ENCODE measurements at regions of chr7 and their contacts with region 1.

Region 1: GRCh38 chr7:123871998-123872867 is 27.3 kb downstream of the HYAL4 start:
- DNase-seq: peak; percentile 21 to 58
- H3K4me3 ChIP-seq: no peak overlapping the region
- H3K27ac ChIP-seq: no peak overlapping the region
- H3K4me1 ChIP-seq: no peaks in the 10 kb centered on the region
- H3K27me3 ChIP-seq: no peaks in the 10 kb centered on the region
- CTCF ChIP-seq: peak; percentile 54 to 80 (median 66)
- EP300 ChIP-seq: no peak
- POLR2A ChIP-seq: no peak
- RAD21 ChIP-seq: peak; percentile 94 to 95

Region 2: GRCh38 chr7:123425246-123425645 is 447.0 kb before region 1 on chr7:
- CTCF ChIA-PET with region 1: no interaction called
- POLR2A ChIA-PET with region 1: no interaction called
- DNase-seq: no peak
- H3K4me3 ChIP-seq: no peak overlapping the region
- H3K27ac ChIP-seq: no peak overlapping the region
- H3K4me1 ChIP-seq: no peaks in the 10 kb centered on the region
- H3K27me3 ChIP-seq: no peaks in the 10 kb centered on the region
- CTCF ChIP-seq: no peak
- EP300 ChIP-seq: no peak
- POLR2A ChIP-seq: no peak
- RAD21 ChIP-seq: no peak

Region 3: DNA sequence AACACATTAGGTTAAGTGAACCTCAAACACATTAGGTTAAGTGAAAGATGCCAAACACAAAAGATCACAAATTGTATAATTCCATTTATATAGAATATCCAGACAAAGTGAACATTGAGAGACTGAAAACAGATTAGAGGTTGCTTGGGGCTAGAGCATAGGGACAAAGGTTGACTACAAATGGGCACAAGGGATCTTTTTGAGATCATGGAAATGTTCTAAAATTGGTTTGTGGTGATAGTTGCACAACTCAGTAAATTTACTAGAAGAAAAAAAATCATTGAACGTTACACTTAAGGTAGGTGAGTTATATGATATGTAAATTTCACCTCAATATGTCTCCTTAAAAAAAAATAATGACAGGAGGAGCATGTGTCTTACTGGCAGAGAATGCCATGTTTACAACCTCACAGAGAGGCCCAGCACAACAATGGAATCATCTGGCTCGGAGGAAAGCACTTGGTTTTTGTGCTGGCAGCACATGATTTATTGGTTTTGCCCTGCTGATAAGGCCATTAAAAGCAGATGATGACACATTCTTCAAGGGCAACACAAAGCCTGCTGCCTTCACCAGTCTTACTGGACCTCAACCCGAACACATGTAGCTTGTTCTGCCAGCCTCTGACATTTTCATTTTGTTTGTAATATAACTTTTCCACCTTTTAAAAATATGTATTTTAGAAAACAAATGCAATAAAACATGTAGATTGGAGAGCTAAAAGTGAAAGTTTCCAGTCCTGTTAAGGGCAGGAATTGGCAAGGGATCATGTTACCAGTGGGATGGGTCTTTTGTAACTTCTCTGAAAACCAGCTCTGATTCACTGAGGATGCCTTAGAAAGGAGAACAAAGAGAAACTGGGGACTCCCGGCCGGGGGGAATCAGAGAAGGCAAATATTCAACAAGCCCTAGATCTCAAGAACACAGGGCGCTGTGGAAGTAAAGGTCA is 228.5 kb before region 1 on chr7:
- CTCF ChIA-PET with region 1: interaction called, 10 read pairs
- POLR2A ChIA-PET with region 1: no interaction called
- DNase-seq: peak; percentile 33 to 57
- H3K4me3 ChIP-seq: peak overlapping the region in 3 of 4 experiments; percentile 6 to 31 (median 12); a peak in 4 of 8 replicates
- H3K27ac ChIP-seq: peak overlapping the region; percentile 60; the same call in 1 of the 2 replicates
- H3K4me1 ChIP-seq: peaks cover 3 to 13% (median 9%) of the 10 kb centered on the region in 4 experiments; a peak in 6 of 7 replicates
- H3K27me3 ChIP-seq: no peaks in the 10 kb centered on the region
- CTCF ChIP-seq: no peak
- EP300 ChIP-seq: no peak
- POLR2A ChIP-seq: peak in 1 of 2 experiments; percentile 55; a peak in 1 of 3 replicates
- RAD21 ChIP-seq: no peak

Region 4: DNA sequence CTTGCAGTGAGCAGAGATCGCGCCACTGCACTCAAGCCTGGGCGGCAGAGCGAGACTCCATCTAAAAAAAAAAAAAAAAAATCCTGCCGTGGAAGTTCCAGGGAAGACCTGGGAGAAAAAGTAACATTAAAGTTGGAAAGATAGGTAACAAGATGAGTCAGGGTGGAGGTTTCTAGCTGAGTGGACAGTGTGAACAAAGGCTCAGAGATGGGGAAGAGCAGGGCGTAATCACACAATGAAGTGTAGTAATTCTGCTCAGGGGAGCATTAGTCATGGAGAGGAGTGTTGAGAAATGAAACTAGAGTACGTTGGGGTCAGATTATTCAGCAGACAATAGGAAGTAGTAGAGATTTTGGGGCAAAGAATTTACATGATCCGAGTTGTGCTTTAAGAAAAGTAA is 101.9 kb before region 1 on chr7:
- CTCF ChIA-PET with region 1: interaction called, 11 read pairs
- POLR2A ChIA-PET with region 1: no interaction called
- DNase-seq: no peak
- H3K4me3 ChIP-seq: no peak overlapping the region
- H3K27ac ChIP-seq: no peak overlapping the region
- H3K4me1 ChIP-seq: no peaks in the 10 kb centered on the region; a peak in 1 of 7 replicates
- H3K27me3 ChIP-seq: no peaks in the 10 kb centered on the region
- CTCF ChIP-seq: no peak
- EP300 ChIP-seq: no peak
- POLR2A ChIP-seq: no peak
- RAD21 ChIP-seq: no peak

Region 5: GRCh38 chr7:123797673-123798527 is 74.3 kb before region 1 on chr7:
- CTCF ChIA-PET with region 1: interaction called, 71 read pairs
- POLR2A ChIA-PET with region 1: no interaction called
- DNase-seq: peak in 1 of 2 experiments; percentile 31
- H3K4me3 ChIP-seq: no peak overlapping the region
- H3K27ac ChIP-seq: no peak overlapping the region
- H3K4me1 ChIP-seq: peaks cover 0 to 3% (median 1%) of the 10 kb centered on the region in 4 experiments; a peak in 2 of 7 replicates
- H3K27me3 ChIP-seq: no peaks in the 10 kb centered on the region
- CTCF ChIP-seq: peak in 2 of 3 experiments; percentile 28 to 46; a peak in 2 of 4 replicates
- EP300 ChIP-seq: no peak
- POLR2A ChIP-seq: no peak
- RAD21 ChIP-seq: peak; percentile 72 to 79

Region 6: GRCh38 chr7:123966936-123967335 is 94.7 kb after region 1 on chr7:
- CTCF ChIA-PET with region 1: no interaction called
- POLR2A ChIA-PET with region 1: no interaction called
- DNase-seq: no peak
- H3K4me3 ChIP-seq: no peak overlapping the region
- H3K27ac ChIP-seq: no peak overlapping the region
- H3K4me1 ChIP-seq: peaks cover 0 to 2% (median 0%) of the 10 kb centered on the region in 4 experiments; a peak in 1 of 7 replicates
- H3K27me3 ChIP-seq: no peaks in the 10 kb centered on the region
- CTCF ChIP-seq: peak in 2 of 3 experiments; percentile 14 to 31; a peak in 1 of 4 replicates
- EP300 ChIP-seq: no peak
- POLR2A ChIP-seq: no peak
- RAD21 ChIP-seq: peak; percentile 50 to 62

Region 7: GRCh38 chr7:124009321-124009720 is 137.1 kb after region 1 on chr7:
- CTCF ChIA-PET with region 1: no interaction called
- POLR2A ChIA-PET with region 1: no interaction called
- DNase-seq: no peak
- H3K4me3 ChIP-seq: no peak overlapping the region
- H3K27ac ChIP-seq: no peak overlapping the region
- H3K4me1 ChIP-seq: no peaks in the 10 kb centered on the region; a peak in 1 of 7 replicates
- H3K27me3 ChIP-seq: no peaks in the 10 kb centered on the region
- CTCF ChIP-seq: no peak
- EP300 ChIP-seq: no peak
- POLR2A ChIP-seq: no peak
- RAD21 ChIP-seq: no peak